ENCODE measurements at regions of chr13 and their contacts with region 1.

Region 1: GRCh38 chr13:40910324-40911050 is 108.6 kb downstream of the ELF1 start:
- DNase-seq: no peak
- H3K4me3 Mint-ChIP-seq: no peak overlapping the region
- H3K27ac Mint-ChIP-seq: no peak overlapping the region
- H3K4me1 Mint-ChIP-seq: peaks cover 2% of the 10 kb centered on the region
- H3K27me3 Mint-ChIP-seq: no peaks in the 10 kb centered on the region

Region 2: GRCh38 chr13:40922437-40923040 is 12.1 kb after region 1 on chr13:
- intact Hi-C with region 1: loop called (anchors 1 kb)
- DNase-seq: no peak
- H3K4me3 Mint-ChIP-seq: peak overlapping the region; percentile 70
- H3K27ac Mint-ChIP-seq: peak overlapping the region; percentile 68
- H3K4me1 Mint-ChIP-seq: peaks cover 9% of the 10 kb centered on the region
- H3K27me3 Mint-ChIP-seq: no peaks in the 10 kb centered on the region